Activated CD4-positive, alpha-beta T cell treated with anti-CD3 and anti-CD28 coated beads, Interleukin-2, amount 10 ng/mL, durations not matched to agents 7 days and 5 days (primary cell): ENCODE measurements at regions of chr17 and their contacts with region 1.

Region 1: GRCh38 chr17:72392056-72393010 is 271.5 kb downstream of the SOX9 start:
- DNase-seq: no peak
- H3K4me3 Mint-ChIP-seq: no peak overlapping the region
- H3K27ac Mint-ChIP-seq: no peak overlapping the region
- H3K4me1 Mint-ChIP-seq: no peaks in the 10 kb centered on the region
- H3K27me3 Mint-ChIP-seq: no peaks in the 10 kb centered on the region

Region 2: DNA sequence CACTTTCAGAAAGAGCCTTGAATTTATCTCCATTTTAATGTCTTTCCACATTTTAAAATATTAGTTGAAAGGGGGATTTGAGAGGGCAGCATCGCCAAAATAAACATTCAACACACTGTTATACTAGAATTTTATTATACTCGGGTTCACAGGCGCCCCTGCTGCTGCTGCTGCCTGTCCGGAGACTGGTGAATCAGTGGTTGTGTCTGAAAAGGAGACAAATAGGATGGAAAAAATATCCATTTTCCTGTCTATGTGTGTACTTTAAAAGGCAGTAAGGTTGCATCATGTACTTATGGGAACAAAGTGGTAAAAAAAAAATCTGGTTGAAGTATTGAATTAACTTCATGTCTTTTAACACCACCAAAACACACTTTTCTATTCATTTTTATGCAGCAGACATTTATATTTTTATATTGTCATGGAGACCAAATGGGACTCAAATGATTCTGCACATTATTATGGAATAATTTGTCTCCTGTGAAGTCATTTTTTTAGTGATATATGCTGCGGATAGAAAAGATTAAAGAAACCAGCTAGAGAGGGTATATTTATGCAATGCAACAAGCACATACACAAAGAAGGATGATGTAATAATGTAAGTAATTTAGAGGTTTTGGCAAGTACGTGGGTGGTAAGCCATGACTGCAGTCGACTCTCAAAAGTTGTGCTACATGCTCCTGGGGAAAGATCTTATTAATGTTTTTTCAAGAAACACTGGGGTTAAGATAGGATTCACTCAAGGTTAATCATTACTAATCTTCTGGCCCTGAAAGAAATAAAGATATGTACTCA is 1030.5 kb before region 1 on chr17:
- CTCF ChIA-PET with region 1: no interaction called
- POLR2A ChIA-PET with region 1: interaction called, 14 read pairs
- DNase-seq: no peak
- H3K4me3 Mint-ChIP-seq: no peak overlapping the region
- H3K27ac Mint-ChIP-seq: no peak overlapping the region
- H3K4me1 Mint-ChIP-seq: no peaks in the 10 kb centered on the region
- H3K27me3 Mint-ChIP-seq: no peaks in the 10 kb centered on the region